Naive thymus-derived CD8-positive, alpha-beta T cell (primary cell): ENCODE measurements at regions of chr19 and their contacts with region 1.

Region 1: GRCh38 chr19:18588611-18589379 is at the start of gene REX1BD:
- DNase-seq: peak; percentile 81 to 94 (median 88)
- ATAC-seq: peak; percentile 74 to 78
- H3K4me3 Mint-ChIP-seq: peak within 1 kb of the TSS; percentile 81 to 95 (median 90)
- H3K27ac Mint-ChIP-seq: peak within 1 kb of the TSS; percentile 87 to 96 (median 94)
- H3K4me1 Mint-ChIP-seq: peaks cover 16 to 48% (median 35%) of the 10 kb centered on the region in 4 donors
- H3K27me3 Mint-ChIP-seq: no peaks in the 10 kb centered on the region
- polyA plus RNA-seq, gene REX1BD: 165 to 196 (median 176) TPM

Region 2: GRCh38 chr19:18542936-18543815 is 45.6 kb before region 1 on chr19 and contains the start of gene FKBP8:
- POLR2A ChIA-PET with region 1: interaction called, 11 read pairs
- DNase-seq: peak; percentile 85 to 96 (median 91)
- ATAC-seq: peak; percentile 98
- H3K4me3 Mint-ChIP-seq: peak within 1 kb of the TSS; percentile 86 to 94 (median 92)
- H3K27ac Mint-ChIP-seq: peak within 1 kb of the TSS; percentile 90 to 98 (median 95)
- H3K4me1 Mint-ChIP-seq: peaks cover 7 to 36% (median 30%) of the 10 kb centered on the region in 4 donors
- H3K27me3 Mint-ChIP-seq: no peaks in the 10 kb centered on the region
- polyA plus RNA-seq, gene FKBP8: 87.0 to 125 (median 106) TPM

Region 3: GRCh38 chr19:18571564-18572300 is 17.1 kb before region 1 on chr19 and contains the start of gene UBA52:
- POLR2A ChIA-PET with region 1: interaction called, 107 read pairs
- DNase-seq: peak; percentile 97 to 99 (median 98)
- ATAC-seq: peak; percentile 92 to 95
- H3K4me3 Mint-ChIP-seq: peak within 1 kb of the TSS; percentile 86 to 99 (median 95)
- H3K27ac Mint-ChIP-seq: peak within 1 kb of the TSS; percentile 88 to 99 (median 98)
- H3K4me1 Mint-ChIP-seq: peaks cover 13 to 26% (median 19%) of the 10 kb centered on the region in 4 donors
- H3K27me3 Mint-ChIP-seq: no peaks in the 10 kb centered on the region
- polyA plus RNA-seq, gene UBA52: 1,743 to 2,077 (median 1,903) TPM

Region 4: GRCh38 chr19:18659281-18660051 is 70.7 kb after region 1 on chr19:
- POLR2A ChIA-PET with region 1: no interaction called
- DNase-seq: no peak
- ATAC-seq: no peak
- H3K4me3 Mint-ChIP-seq: peak overlapping the region in 1 of 10 donors; percentile 15
- H3K27ac Mint-ChIP-seq: peak overlapping the region in 6 of 10 donors; percentile 35 to 85 (median 68)
- H3K4me1 Mint-ChIP-seq: peaks cover 30 to 48% (median 41%) of the 10 kb centered on the region in 4 donors
- H3K27me3 Mint-ChIP-seq: no peaks in the 10 kb centered on the region

Region 5: DNA sequence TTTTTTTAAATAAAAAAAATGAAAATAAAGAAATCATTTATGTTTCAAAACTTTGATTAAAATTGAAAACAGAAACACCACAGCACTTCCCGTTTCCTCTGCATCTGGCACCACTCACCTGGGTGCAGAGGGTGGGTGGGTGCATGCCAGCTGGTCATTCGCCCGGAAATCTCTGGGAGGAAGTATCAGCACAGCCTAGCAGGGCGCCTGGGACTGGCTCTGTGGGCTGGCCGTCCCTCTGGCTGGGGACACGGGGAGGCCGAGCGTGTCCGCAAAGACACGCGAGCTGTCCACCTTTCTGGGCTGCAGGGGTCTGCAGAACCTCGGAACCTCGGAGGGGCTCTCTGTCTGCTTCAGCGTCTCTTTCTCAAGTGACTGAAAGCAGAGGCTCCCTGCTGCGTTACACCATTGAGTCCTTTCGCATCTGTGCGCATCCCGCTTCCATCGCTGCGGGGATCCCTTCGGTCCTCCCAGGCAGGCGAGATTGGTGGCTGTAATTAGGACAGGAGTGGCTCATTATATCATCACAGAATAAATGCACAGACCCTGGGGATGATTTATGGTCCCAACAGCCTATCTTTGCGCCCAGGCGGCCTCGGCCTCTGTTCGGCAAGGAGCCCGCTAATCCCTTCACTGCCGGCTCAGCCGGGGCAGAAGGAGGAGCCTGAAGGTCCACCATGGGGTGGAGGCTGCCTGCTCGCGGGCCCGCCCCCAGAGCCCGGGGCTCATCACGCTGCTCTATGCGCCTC is 111.9 kb after region 1 on chr19:
- POLR2A ChIA-PET with region 1: interaction called, 21 read pairs
- DNase-seq: peak; percentile 54 to 83 (median 64)
- ATAC-seq: peak; percentile 94 to 95
- H3K4me3 Mint-ChIP-seq: peak overlapping the region; percentile 85 to 95 (median 90)
- H3K27ac Mint-ChIP-seq: peak overlapping the region; percentile 91 to 98 (median 96)
- H3K4me1 Mint-ChIP-seq: peaks cover 21 to 59% (median 46%) of the 10 kb centered on the region in 4 donors
- H3K27me3 Mint-ChIP-seq: no peaks in the 10 kb centered on the region

Region 6: GRCh38 chr19:18919086-18919899 is 330.5 kb after region 1 on chr19 and contains the starts of genes COPE and DDX49:
- POLR2A ChIA-PET with region 1: interaction called, 19 read pairs
- DNase-seq: peak; percentile 85 to 99 (median 98)
- ATAC-seq: peak; percentile 94 to 95
- H3K4me3 Mint-ChIP-seq: peak within 1 kb of the TSS; percentile 80 to 97 (median 92)
- H3K27ac Mint-ChIP-seq: peak within 1 kb of the TSS; percentile 72 to 98 (median 96)
- H3K4me1 Mint-ChIP-seq: peaks cover 14 to 58% (median 43%) of the 10 kb centered on the region in 4 donors
- H3K27me3 Mint-ChIP-seq: no peaks in the 10 kb centered on the region
- polyA plus RNA-seq, gene COPE: 224 to 259 (median 235) TPM
- polyA plus RNA-seq, gene DDX49: 21.7 to 37.5 (median 24.7) TPM